Ovary (tissue), 10 donors: ENCODE measurements at regions of chrX and their contacts with region 1.

Region 1: GRCh38 chrX:64394874-64395567 is at the start of gene MTMR8:
- DNase-seq: peak; percentile 76 to 85 (median 84)
- H3K4me3 ChIP-seq: peak within 1 kb of the TSS; percentile 61
- H3K27ac ChIP-seq: peak within 1 kb of the TSS in 1 of 2 donors; percentile 57
- H3K4me1 ChIP-seq: no peaks in the 10 kb centered on the region
- H3K27me3 ChIP-seq: no peaks in the 10 kb centered on the region
- CTCF ChIP-seq: no peak
- EP300 ChIP-seq: no peak
- POLR2A ChIP-seq: no peak
- total RNA-seq, gene MTMR8: 2.5 to 6.0 (median 5.1) TPM

Region 2: DNA sequence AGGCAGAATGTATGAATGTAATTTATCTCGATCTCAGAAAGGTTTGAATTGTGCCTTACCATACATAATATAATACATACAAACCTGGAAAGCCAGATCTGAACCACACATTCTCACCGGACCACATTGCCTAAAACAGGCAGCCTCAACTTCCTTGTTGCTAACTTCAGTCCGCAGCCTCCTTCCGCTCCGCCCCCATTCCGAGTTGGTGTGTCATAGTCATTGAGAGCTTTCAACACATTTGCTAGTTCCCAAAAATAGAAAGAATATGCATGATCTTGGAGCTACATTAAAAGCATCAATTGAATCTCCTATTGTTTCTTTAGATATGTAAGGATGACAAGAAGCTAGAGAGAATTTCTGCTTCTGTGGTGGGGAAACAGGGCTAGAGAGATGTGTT is 737.2 kb before region 1 on chrX:
- intact Hi-C with region 1: no loop called
- DNase-seq: peak in 1 of 5 donors; percentile 20
- H3K4me3 ChIP-seq: no peak overlapping the region
- H3K27ac ChIP-seq: no peak overlapping the region
- H3K4me1 ChIP-seq: no peaks in the 10 kb centered on the region
- H3K27me3 ChIP-seq: no peaks in the 10 kb centered on the region
- CTCF ChIP-seq: no peak
- EP300 ChIP-seq: no peak
- POLR2A ChIP-seq: no peak

Region 3: DNA sequence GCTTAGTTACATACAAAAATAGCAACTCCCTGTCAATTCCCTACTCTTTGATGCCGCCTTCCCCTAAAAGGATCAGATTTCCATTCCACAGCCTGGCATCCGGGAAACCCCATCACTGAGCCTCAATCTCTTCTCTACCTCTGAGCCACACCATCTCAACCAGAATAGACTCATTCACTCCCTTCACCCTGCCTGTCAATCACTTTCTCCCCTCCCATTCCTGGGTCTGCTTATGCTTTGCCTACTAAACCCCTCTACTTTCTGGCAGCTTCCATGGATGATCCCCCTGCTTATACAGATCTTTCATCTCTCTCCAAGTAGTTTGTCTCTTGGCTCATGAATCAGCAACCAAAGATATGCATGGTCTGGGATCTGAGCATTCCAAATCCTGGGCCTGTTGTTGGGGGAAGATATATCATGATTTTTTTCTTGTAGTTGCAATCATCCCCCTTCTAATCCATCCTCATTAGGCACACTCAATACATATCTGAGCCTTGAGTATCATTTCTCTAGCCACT is 192.2 kb before region 1 on chrX:
- intact Hi-C with region 1: no loop called
- DNase-seq: no peak
- H3K4me3 ChIP-seq: no peak overlapping the region
- H3K27ac ChIP-seq: no peak overlapping the region
- H3K4me1 ChIP-seq: peaks cover 10% of the 10 kb centered on the region
- H3K27me3 ChIP-seq: no peaks in the 10 kb centered on the region
- CTCF ChIP-seq: no peak
- EP300 ChIP-seq: no peak
- POLR2A ChIP-seq: no peak

Region 4: DNA sequence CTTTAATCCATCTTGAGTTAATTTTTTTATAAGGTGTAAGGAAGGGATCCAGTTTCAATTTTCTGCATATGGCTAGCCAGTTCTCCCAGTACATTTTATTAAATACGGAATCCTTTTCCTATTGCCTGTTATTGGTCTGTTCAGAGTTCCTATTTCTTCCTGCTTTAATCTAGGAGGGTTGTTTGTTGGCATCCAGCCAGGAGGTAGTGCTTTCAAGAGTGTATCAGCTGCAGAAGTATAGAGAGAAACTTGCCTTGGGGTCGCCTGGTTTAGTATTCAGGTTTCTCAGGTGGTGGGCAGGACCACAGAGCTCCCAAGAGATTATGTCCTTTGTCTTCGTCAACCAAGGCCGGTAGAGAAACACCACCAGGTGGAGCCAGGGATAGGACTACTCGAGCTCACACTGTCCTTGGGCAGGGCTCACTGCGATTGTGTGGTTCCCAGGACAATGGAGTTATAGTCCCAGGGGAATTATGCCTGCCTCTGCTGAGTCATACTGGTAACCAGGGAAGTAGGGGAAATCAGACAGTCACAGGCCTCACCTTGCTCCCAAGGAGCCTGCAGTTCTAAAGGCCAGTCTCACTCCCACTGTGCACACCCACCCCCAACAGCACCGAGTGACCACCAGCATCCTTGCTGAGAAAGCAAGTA is 1476.8 kb after region 1 on chrX:
- intact Hi-C with region 1: loop called in 1 of 4 experiments (anchors 10 kb)
- DNase-seq: no peak
- H3K4me3 ChIP-seq: no peak overlapping the region
- H3K27ac ChIP-seq: no peak overlapping the region
- H3K4me1 ChIP-seq: no peaks in the 10 kb centered on the region
- H3K27me3 ChIP-seq: no peaks in the 10 kb centered on the region
- CTCF ChIP-seq: no peak
- EP300 ChIP-seq: no peak
- POLR2A ChIP-seq: no peak